Head of caudate nucleus (tissue), 42 donors: ENCODE measurements at regions of chr7 and their contacts with region 1.

Region 1: DNA sequence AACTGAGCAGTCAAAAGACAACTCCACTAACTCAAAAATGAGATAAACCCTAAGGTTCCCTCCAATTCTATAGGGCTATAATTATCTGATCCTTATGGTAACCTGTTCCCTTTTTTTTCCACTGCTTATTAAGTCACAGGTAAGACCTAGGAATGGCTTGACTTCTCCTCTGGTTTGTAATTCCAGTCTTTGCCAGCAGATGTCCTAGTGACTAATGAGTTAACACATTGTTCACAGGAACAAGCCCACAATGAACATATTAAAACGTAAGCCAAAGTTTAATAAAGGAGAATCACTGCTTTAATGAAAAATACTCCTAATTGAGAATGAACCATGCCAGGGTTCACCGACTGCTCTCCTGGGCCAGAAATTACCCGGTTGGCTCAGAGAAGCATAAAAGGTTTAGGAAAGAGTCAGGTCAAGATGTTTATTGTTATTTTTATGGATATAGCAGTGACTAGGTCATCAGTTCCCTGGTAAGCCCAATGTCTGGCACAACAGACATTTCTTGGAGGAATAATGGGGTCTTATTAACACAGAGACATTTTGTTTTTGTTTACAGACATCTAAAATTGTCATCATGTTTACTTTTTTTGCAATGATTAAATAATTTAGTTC is 120.1 kb downstream of the ELAPOR2 start:
- DNase-seq: peak in 20 of 42 donors; percentile 5 to 87 (median 64)

Region 2: GRCh38 chr7:87059525-87060287 is 120.4 kb after region 1 on chr7 and contains the start of gene ELAPOR2:
- intact Hi-C with region 1: loop called (anchors 2 kb)
- DNase-seq: peak; percentile 70 to 95 (median 90)

Region 3: DNA sequence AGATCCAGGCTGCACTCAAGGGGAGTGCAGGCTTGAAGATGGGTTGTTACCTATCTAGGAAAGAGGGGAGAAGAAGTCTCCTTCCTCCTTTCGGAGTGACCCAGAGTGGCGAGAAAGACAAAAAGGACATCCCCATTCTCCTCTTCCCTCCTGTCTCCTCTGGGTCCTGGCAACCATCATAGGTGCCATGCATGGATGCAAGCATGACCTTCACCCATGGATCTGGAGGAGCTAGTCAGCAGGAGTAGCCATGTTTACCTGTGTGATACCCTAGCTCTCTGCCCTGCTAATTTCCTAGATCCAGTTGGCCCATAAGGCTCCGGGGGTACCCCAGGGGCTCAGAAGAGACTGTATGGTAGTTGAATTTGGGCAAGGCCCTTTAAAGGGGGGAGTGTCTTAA is 389.0 kb after region 1 on chr7:
- intact Hi-C with region 1: no loop called
- DNase-seq: no peak